ENCODE measurements at regions of chr7 and their contacts with region 1.

Region 1: GRCh38 chr7:51067757-51068156 is 248.9 kb downstream of the COBL start:
- DNase-seq: peak; percentile 68 to 73
- H3K4me3 ChIP-seq: no peak overlapping the region
- H3K4me3 Mint-ChIP-seq: no peak overlapping the region
- H3K27ac Mint-ChIP-seq: no peak overlapping the region
- H3K4me1 ChIP-seq: peaks cover 16% of the 10 kb centered on the region
- H3K4me1 Mint-ChIP-seq: peaks cover 17% of the 10 kb centered on the region
- H3K27me3 ChIP-seq: no peaks in the 10 kb centered on the region
- H3K27me3 Mint-ChIP-seq: no peaks in the 10 kb centered on the region
- CTCF ChIP-seq: peak; percentile 70 to 76

Region 2: DNA sequence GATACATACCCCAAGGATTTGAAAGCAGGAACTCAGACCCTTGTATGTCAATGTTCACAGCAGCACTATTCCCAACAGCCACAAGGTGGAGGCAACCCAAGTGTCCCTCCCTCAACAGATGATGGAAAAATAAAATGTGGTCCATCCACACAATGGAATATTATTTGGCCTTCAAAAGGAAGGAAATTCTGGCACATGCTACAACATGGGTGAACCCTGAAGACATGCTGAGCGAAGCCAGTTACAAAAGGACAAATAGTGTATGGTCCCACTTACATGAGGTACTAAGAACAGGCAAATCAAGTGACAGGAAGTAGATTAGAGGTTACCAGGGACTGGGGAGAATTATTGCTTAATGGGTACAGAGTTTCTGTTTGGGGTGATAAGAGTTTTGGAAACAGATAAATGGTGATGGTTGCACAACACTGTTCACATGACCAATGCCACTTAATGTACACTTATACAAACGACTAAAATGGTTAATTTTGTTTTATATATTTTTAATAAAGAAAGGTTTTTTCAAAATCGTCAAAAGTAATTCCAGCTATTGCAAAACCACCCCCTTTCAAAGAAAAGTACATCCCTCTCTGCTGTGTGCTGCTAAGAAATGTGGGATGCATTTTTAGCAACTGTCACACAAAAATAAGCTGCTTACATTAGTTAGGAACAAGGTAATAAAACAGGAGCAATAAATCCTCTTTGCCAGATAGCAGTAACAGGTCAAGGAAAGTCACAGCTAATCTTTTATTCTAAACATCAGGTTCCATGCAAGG is 370.8 kb before region 1 on chr7:
- CTCF ChIA-PET with region 1: no interaction called
- POLR2A ChIA-PET with region 1: no interaction called
- intact Hi-C with region 1: loop called (anchors 10 kb)
- DNase-seq: peak in 1 of 2 experiments; percentile 31
- H3K4me3 ChIP-seq: no peak overlapping the region
- H3K4me3 Mint-ChIP-seq: no peak overlapping the region
- H3K27ac Mint-ChIP-seq: peak overlapping the region; percentile 8
- H3K4me1 ChIP-seq: no peaks in the 10 kb centered on the region
- H3K4me1 Mint-ChIP-seq: peaks cover 7% of the 10 kb centered on the region
- H3K27me3 ChIP-seq: no peaks in the 10 kb centered on the region
- H3K27me3 Mint-ChIP-seq: no peaks in the 10 kb centered on the region
- CTCF ChIP-seq: peak; percentile 49 to 59

Region 3: GRCh38 chr7:50782384-50783208 is 285.2 kb before region 1 on chr7 and contains the start of gene GRB10:
- CTCF ChIA-PET with region 1: no interaction called
- POLR2A ChIA-PET with region 1: no interaction called
- intact Hi-C with region 1: loop called (anchors 5 kb)
- DNase-seq: peak in 1 of 2 experiments; percentile 50
- H3K4me3 ChIP-seq: peak within 1 kb of the TSS; percentile 41
- H3K4me3 Mint-ChIP-seq: peak within 1 kb of the TSS; percentile 50
- H3K27ac Mint-ChIP-seq: no peak within 1 kb of the TSS
- H3K4me1 ChIP-seq: peaks cover 24% of the 10 kb centered on the region
- H3K4me1 Mint-ChIP-seq: peaks cover 23% of the 10 kb centered on the region
- H3K27me3 ChIP-seq: no peaks in the 10 kb centered on the region
- H3K27me3 Mint-ChIP-seq: no peaks in the 10 kb centered on the region
- CTCF ChIP-seq: no peak
- total RNA-seq, gene GRB10: 79.3 and 87.2 TPM in 2 replicates

Region 4: DNA sequence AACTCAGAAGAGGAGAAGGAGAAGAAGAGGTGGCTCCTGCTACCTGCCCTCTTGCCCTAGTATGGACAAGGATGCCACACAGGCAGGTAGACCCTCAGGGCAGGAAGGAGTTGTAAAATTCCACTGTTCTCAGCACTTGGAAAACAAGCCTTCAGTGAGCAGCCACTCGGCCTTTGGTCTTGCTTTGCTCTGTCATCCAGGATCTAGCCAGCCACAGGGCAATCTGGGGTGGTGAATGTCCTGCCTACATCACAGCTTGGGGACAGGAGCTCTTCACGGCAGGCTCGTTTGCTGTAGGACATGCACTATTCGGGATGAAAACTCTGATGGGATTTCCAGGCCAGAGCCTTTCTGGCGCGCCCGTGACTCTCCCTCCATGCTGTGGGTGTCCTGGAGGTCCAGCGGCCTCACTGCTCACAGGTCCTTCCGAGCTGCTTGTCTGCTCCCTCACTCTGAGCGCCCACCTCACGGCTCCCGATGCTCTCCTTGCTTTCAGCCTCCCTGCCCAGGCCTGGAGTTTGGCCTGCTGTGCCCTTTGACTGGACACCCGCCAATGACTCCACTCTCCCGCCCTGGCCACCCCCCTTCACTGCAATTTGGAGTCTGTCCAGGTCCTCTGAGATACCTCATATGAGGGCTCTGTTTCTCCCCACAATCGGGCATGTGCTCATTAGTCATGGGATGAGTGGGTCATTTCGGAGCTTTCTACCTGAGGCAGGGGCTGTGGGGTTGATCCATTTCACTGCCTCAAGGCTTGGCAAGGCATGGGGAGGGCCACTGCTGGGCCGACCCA is 57.9 kb before region 1 on chr7:
- CTCF ChIA-PET with region 1: no interaction called
- POLR2A ChIA-PET with region 1: no interaction called
- intact Hi-C with region 1: loop called (anchors 5 kb)
- DNase-seq: no peak
- H3K4me3 ChIP-seq: no peak overlapping the region
- H3K4me3 Mint-ChIP-seq: no peak overlapping the region
- H3K27ac Mint-ChIP-seq: no peak overlapping the region
- H3K4me1 ChIP-seq: no peaks in the 10 kb centered on the region
- H3K4me1 Mint-ChIP-seq: peaks cover 8% of the 10 kb centered on the region
- H3K27me3 ChIP-seq: no peaks in the 10 kb centered on the region
- H3K27me3 Mint-ChIP-seq: no peaks in the 10 kb centered on the region
- CTCF ChIP-seq: no peak

Region 5: GRCh38 chr7:51045319-51046102 is 22.2 kb before region 1 on chr7:
- CTCF ChIA-PET with region 1: no interaction called
- POLR2A ChIA-PET with region 1: no interaction called
- intact Hi-C with region 1: loop called (anchors 1 kb)
- DNase-seq: peak; percentile 78 to 89
- H3K4me3 ChIP-seq: no peak overlapping the region
- H3K4me3 Mint-ChIP-seq: peak overlapping the region; percentile 65
- H3K27ac Mint-ChIP-seq: peak overlapping the region; percentile 97
- H3K4me1 ChIP-seq: peaks cover 32% of the 10 kb centered on the region
- H3K4me1 Mint-ChIP-seq: peaks cover 27% of the 10 kb centered on the region
- H3K27me3 ChIP-seq: no peaks in the 10 kb centered on the region
- H3K27me3 Mint-ChIP-seq: no peaks in the 10 kb centered on the region
- CTCF ChIP-seq: no peak

Region 6: GRCh38 chr7:51111241-51111940 is 43.6 kb after region 1 on chr7:
- CTCF ChIA-PET with region 1: no interaction called
- POLR2A ChIA-PET with region 1: no interaction called
- intact Hi-C with region 1: no loop called
- DNase-seq: no peak
- H3K4me3 ChIP-seq: no peak overlapping the region
- H3K4me3 Mint-ChIP-seq: no peak overlapping the region
- H3K27ac Mint-ChIP-seq: no peak overlapping the region
- H3K4me1 ChIP-seq: no peaks in the 10 kb centered on the region
- H3K4me1 Mint-ChIP-seq: no peaks in the 10 kb centered on the region
- H3K27me3 ChIP-seq: no peaks in the 10 kb centered on the region
- H3K27me3 Mint-ChIP-seq: no peaks in the 10 kb centered on the region
- CTCF ChIP-seq: no peak

Region 7: GRCh38 chr7:51141451-51142003 is 73.8 kb after region 1 on chr7:
- CTCF ChIA-PET with region 1: no interaction called
- POLR2A ChIA-PET with region 1: no interaction called
- intact Hi-C with region 1: no loop called
- DNase-seq: peak in 1 of 2 experiments; percentile 38
- H3K4me3 ChIP-seq: no peak overlapping the region
- H3K4me3 Mint-ChIP-seq: no peak overlapping the region
- H3K27ac Mint-ChIP-seq: no peak overlapping the region
- H3K4me1 ChIP-seq: no peaks in the 10 kb centered on the region
- H3K4me1 Mint-ChIP-seq: no peaks in the 10 kb centered on the region
- H3K27me3 ChIP-seq: no peaks in the 10 kb centered on the region
- H3K27me3 Mint-ChIP-seq: no peaks in the 10 kb centered on the region
- CTCF ChIP-seq: peak; percentile 37 to 44

Region 8: DNA sequence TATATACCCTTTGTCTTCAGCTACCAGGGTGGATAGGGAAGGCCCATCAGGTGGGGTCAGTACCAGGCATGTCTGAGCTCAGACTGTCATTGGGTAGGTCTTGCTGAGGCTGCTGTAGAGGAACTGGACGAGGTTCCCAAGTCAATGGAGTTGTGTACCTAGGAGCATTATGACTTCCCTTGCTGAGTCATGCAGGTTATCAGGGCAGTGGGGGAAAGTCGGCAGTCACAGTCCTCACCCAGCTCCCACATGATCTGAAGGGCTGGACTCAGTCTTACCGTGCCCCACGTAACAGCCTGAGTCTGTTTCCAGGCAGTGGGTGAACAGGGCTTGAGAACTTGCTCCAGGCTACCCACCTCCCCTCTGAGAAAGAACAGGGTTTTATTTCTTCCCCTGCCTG is 509.6 kb after region 1 on chr7:
- CTCF ChIA-PET with region 1: no interaction called
- POLR2A ChIA-PET with region 1: no interaction called
- intact Hi-C with region 1: loop called (anchors 10 kb)
- DNase-seq: no peak
- H3K4me3 ChIP-seq: no peak overlapping the region
- H3K4me3 Mint-ChIP-seq: no peak overlapping the region
- H3K27ac Mint-ChIP-seq: no peak overlapping the region
- H3K4me1 ChIP-seq: no peaks in the 10 kb centered on the region
- H3K4me1 Mint-ChIP-seq: no peaks in the 10 kb centered on the region
- H3K27me3 ChIP-seq: no peaks in the 10 kb centered on the region
- H3K27me3 Mint-ChIP-seq: no peaks in the 10 kb centered on the region
- CTCF ChIP-seq: no peak

Measured in Caco-2 (cell line).